Right cardiac atrium (tissue), 5 donors: ENCODE measurements at regions of chr2 and their contacts with region 1.

Region 1: GRCh38 chr2:33529771-33530351 is 53.4 kb downstream of the RASGRP3 start:
- DNase-seq: no peak
- ATAC-seq: peak in 1 of 2 donors; percentile 11
- H3K4me3 ChIP-seq: no peak overlapping the region
- H3K27ac ChIP-seq: no peak overlapping the region
- H3K4me1 ChIP-seq: peaks cover 5% of the 10 kb centered on the region
- H3K27me3 ChIP-seq: no peaks in the 10 kb centered on the region

Region 2: GRCh38 chr2:32910883-32911598 is 618.8 kb before region 1 on chr2:
- intact Hi-C with region 1: no loop called
- DNase-seq: no peak
- ATAC-seq: no peak
- H3K4me3 ChIP-seq: no peak overlapping the region
- H3K27ac ChIP-seq: no peak overlapping the region
- H3K4me1 ChIP-seq: no peaks in the 10 kb centered on the region
- H3K27me3 ChIP-seq: no peaks in the 10 kb centered on the region

Region 3: DNA sequence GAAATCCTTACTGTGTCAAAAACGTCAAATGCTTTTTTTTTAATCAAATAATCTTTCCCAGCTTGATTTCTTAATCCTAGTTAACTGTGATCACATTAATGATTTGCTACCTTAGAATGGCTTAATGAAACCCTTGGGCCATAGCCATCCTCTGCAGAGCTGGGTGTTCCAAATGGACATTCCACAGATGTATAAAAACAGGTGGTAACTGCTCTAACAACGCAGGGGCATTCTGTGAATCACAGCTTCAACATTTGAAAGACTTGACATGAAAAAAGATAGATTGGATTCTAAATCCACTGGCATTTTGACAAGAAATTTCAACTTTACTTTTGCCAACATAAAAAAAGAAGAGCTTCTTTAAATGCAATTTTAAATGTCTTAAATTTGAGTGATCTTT is 123.2 kb before region 1 on chr2:
- intact Hi-C with region 1: no loop called
- DNase-seq: no peak
- ATAC-seq: no peak
- H3K4me3 ChIP-seq: no peak overlapping the region
- H3K27ac ChIP-seq: no peak overlapping the region
- H3K4me1 ChIP-seq: no peaks in the 10 kb centered on the region
- H3K27me3 ChIP-seq: no peaks in the 10 kb centered on the region

Region 4: GRCh38 chr2:33475224-33476130 is 54.4 kb before region 1 on chr2:
- intact Hi-C with region 1: loop called in 3 of 4 experiments (anchors 5 to 10 kb)
- DNase-seq: peak; percentile 67 to 88 (median 83)
- ATAC-seq: peak; percentile 61 to 66
- H3K4me3 ChIP-seq: peak overlapping the region; percentile 70
- H3K27ac ChIP-seq: peak overlapping the region; percentile 97
- H3K4me1 ChIP-seq: peaks cover 5% of the 10 kb centered on the region
- H3K27me3 ChIP-seq: no peaks in the 10 kb centered on the region

Region 5: GRCh38 chr2:33488715-33489540 is 40.9 kb before region 1 on chr2:
- intact Hi-C with region 1: loop called in 2 of 4 experiments (anchors 5 to 10 kb)
- DNase-seq: no peak
- ATAC-seq: no peak
- H3K4me3 ChIP-seq: no peak overlapping the region
- H3K27ac ChIP-seq: no peak overlapping the region
- H3K4me1 ChIP-seq: peaks cover 9% of the 10 kb centered on the region
- H3K27me3 ChIP-seq: no peaks in the 10 kb centered on the region